ENCODE measurements at regions of chr6 and their contacts with region 1.

Region 1: GRCh38 chr6:51753635-51754034 is 333.8 kb downstream of the PKHD1 start:
- DNase-seq: peak; percentile 39 to 82
- H3K4me3 ChIP-seq: no peak overlapping the region
- H3K27ac ChIP-seq: no peak overlapping the region
- H3K4me1 ChIP-seq: no peaks in the 10 kb centered on the region
- H3K27me3 ChIP-seq: no peaks in the 10 kb centered on the region
- CTCF ChIP-seq: peak; percentile 71 to 96 (median 94)
- EP300 ChIP-seq: no peak
- POLR2A ChIP-seq: no peak
- RAD21 ChIP-seq: peak; percentile 79 to 84

Region 2: GRCh38 chr6:51542475-51542874 is 211.2 kb before region 1 on chr6:
- CTCF ChIA-PET with region 1: no interaction called
- POLR2A ChIA-PET with region 1: no interaction called
- DNase-seq: no peak
- H3K4me3 ChIP-seq: no peak overlapping the region
- H3K27ac ChIP-seq: no peak overlapping the region
- H3K4me1 ChIP-seq: peaks cover 0 to 7% (median 0%) of the 10 kb centered on the region in 4 experiments; a peak in 2 of 7 replicates
- H3K27me3 ChIP-seq: no peaks in the 10 kb centered on the region
- CTCF ChIP-seq: no peak
- EP300 ChIP-seq: no peak
- POLR2A ChIP-seq: no peak
- RAD21 ChIP-seq: no peak

Region 3: DNA sequence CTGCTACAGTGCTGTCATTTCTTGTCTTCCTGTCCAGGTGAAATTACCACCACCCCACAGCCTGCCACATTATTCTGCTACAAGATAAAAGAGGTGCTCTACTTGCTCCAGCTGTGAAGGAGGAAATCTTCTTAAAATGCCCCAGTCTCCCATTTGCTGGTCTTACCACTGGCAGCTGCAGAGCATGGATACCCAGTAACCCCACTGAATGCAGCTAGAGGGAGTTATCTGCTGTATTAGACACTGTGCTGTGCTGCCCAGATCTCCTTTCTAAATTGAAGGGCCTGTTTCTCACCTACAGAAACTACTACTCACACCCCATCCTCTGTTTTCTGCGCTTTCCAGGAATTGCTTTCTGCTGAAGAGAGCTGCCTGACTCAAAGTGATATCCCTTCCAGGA is 184.0 kb before region 1 on chr6:
- CTCF ChIA-PET with region 1: interaction called, 12 read pairs
- POLR2A ChIA-PET with region 1: no interaction called
- DNase-seq: no peak
- H3K4me3 ChIP-seq: no peak overlapping the region
- H3K27ac ChIP-seq: no peak overlapping the region
- H3K4me1 ChIP-seq: no peaks in the 10 kb centered on the region
- H3K27me3 ChIP-seq: peaks cover 0 to 1% (median 0%) of the 10 kb centered on the region in 4 experiments; a peak in 1 of 7 replicates
- CTCF ChIP-seq: peak; percentile 12 to 63 (median 54)
- EP300 ChIP-seq: no peak
- POLR2A ChIP-seq: no peak
- RAD21 ChIP-seq: peak; percentile 49 to 64

Region 4: DNA sequence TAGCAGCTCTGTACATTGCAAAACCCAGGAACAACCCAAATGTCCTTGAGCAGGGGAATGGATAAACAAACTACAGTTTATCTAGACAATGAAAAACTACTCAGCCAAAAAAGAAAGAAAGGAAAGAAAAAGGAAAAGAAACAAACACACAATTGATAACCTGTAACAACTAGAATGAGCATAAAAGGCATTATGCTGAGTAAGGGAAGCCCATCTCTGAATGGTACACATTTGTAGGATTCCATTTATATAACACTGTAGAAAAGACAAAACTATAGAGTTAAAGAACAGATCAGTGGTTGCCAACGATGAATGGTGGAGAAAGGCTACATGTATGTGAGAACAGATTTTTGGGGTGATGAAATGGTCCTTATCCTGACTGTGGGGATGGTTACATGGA is 120.2 kb before region 1 on chr6:
- CTCF ChIA-PET with region 1: no interaction called
- POLR2A ChIA-PET with region 1: no interaction called
- DNase-seq: no peak
- H3K4me3 ChIP-seq: no peak overlapping the region
- H3K27ac ChIP-seq: no peak overlapping the region
- H3K4me1 ChIP-seq: no peaks in the 10 kb centered on the region
- H3K27me3 ChIP-seq: no peaks in the 10 kb centered on the region
- CTCF ChIP-seq: no peak
- EP300 ChIP-seq: no peak
- POLR2A ChIP-seq: no peak
- RAD21 ChIP-seq: no peak

Region 5: DNA sequence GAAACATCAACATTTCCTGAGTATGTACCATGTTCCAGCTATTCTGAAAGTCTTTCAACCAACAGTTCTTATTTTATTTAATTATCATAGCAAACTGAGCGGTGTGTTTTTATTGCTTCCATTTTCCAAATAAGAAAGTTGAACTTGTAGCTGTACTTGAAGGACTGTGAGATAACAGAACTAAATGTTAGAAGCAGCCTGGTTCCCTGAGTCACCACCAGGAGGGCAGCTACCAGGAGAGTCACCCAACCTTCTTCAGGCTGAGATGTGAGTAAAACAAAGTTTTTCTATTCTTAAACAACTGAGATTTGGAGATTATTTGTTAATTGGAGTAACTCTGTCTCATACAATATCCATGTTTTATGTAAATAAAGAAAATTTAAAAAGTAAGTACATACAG is 69.6 kb before region 1 on chr6:
- CTCF ChIA-PET with region 1: no interaction called
- POLR2A ChIA-PET with region 1: no interaction called
- DNase-seq: no peak
- H3K4me3 ChIP-seq: no peak overlapping the region
- H3K27ac ChIP-seq: no peak overlapping the region
- H3K4me1 ChIP-seq: no peaks in the 10 kb centered on the region
- H3K27me3 ChIP-seq: no peaks in the 10 kb centered on the region
- CTCF ChIP-seq: peak in 1 of 3 experiments; percentile 27; a peak in 1 of 4 replicates
- EP300 ChIP-seq: no peak
- POLR2A ChIP-seq: no peak
- RAD21 ChIP-seq: no peak; a peak in 1 of 4 replicates

Region 6: GRCh38 chr6:51737580-51738360 is 15.9 kb before region 1 on chr6:
- CTCF ChIA-PET with region 1: interaction called, 17 read pairs
- POLR2A ChIA-PET with region 1: no interaction called
- DNase-seq: no peak
- H3K4me3 ChIP-seq: no peak overlapping the region
- H3K27ac ChIP-seq: no peak overlapping the region
- H3K4me1 ChIP-seq: peaks cover 0 to 2% (median 0%) of the 10 kb centered on the region in 4 experiments; a peak in 1 of 7 replicates
- H3K27me3 ChIP-seq: no peaks in the 10 kb centered on the region; a peak in 1 of 7 replicates
- CTCF ChIP-seq: no peak
- EP300 ChIP-seq: no peak
- POLR2A ChIP-seq: no peak
- RAD21 ChIP-seq: no peak

Region 7: GRCh38 chr6:51768087-51768486 is 14.5 kb after region 1 on chr6:
- CTCF ChIA-PET with region 1: interaction called, 12 read pairs
- POLR2A ChIA-PET with region 1: no interaction called
- DNase-seq: no peak
- H3K4me3 ChIP-seq: no peak overlapping the region
- H3K27ac ChIP-seq: no peak overlapping the region
- H3K4me1 ChIP-seq: no peaks in the 10 kb centered on the region
- H3K27me3 ChIP-seq: no peaks in the 10 kb centered on the region
- CTCF ChIP-seq: no peak
- EP300 ChIP-seq: no peak
- POLR2A ChIP-seq: no peak
- RAD21 ChIP-seq: no peak

Region 8: GRCh38 chr6:51778666-51779065 is 25.0 kb after region 1 on chr6:
- CTCF ChIA-PET with region 1: interaction called, 10 read pairs
- POLR2A ChIA-PET with region 1: no interaction called
- DNase-seq: no peak
- H3K4me3 ChIP-seq: no peak overlapping the region
- H3K27ac ChIP-seq: no peak overlapping the region
- H3K4me1 ChIP-seq: no peaks in the 10 kb centered on the region
- H3K27me3 ChIP-seq: no peaks in the 10 kb centered on the region
- CTCF ChIP-seq: no peak
- EP300 ChIP-seq: no peak
- POLR2A ChIP-seq: no peak
- RAD21 ChIP-seq: no peak

Region 9: GRCh38 chr6:51844336-51844735 is 90.7 kb after region 1 on chr6:
- CTCF ChIA-PET with region 1: interaction called, 10 read pairs
- POLR2A ChIA-PET with region 1: no interaction called
- DNase-seq: no peak
- H3K4me3 ChIP-seq: no peak overlapping the region
- H3K27ac ChIP-seq: no peak overlapping the region
- H3K4me1 ChIP-seq: peaks cover 1 to 19% (median 11%) of the 10 kb centered on the region in 4 experiments; a peak in 6 of 7 replicates
- H3K27me3 ChIP-seq: no peaks in the 10 kb centered on the region
- CTCF ChIP-seq: peak; percentile 37 to 65 (median 51)
- EP300 ChIP-seq: no peak
- POLR2A ChIP-seq: no peak
- RAD21 ChIP-seq: peak; percentile 80 to 84